ENCODE measurements at regions of chr10 and their contacts with region 1.

Region 1: GRCh38 chr10:68600041-68600778 is 40.1 kb downstream of the TET1 start:
- DNase-seq: peak; percentile 73
- ATAC-seq: peak; percentile 88
- H3K4me3 Mint-ChIP-seq: peak overlapping the region; percentile 80
- H3K27ac Mint-ChIP-seq: peak overlapping the region; percentile 95
- H3K4me1 Mint-ChIP-seq: peaks cover 26% of the 10 kb centered on the region
- H3K27me3 Mint-ChIP-seq: no peaks in the 10 kb centered on the region

Region 2: GRCh38 chr10:68318331-68319059 is 281.7 kb before region 1 on chr10:
- CTCF ChIA-PET with region 1: no interaction called
- POLR2A ChIA-PET with region 1: no interaction called
- intact Hi-C with region 1: no loop called
- DNase-seq: no peak
- ATAC-seq: no peak
- H3K4me3 Mint-ChIP-seq: no peak overlapping the region
- H3K27ac Mint-ChIP-seq: no peak overlapping the region
- H3K4me1 Mint-ChIP-seq: peaks cover 8% of the 10 kb centered on the region
- H3K27me3 Mint-ChIP-seq: no peaks in the 10 kb centered on the region

Region 3: GRCh38 chr10:68489919-68490318 is 110.3 kb before region 1 on chr10:
- CTCF ChIA-PET with region 1: no interaction called
- POLR2A ChIA-PET with region 1: no interaction called
- intact Hi-C with region 1: no loop called
- DNase-seq: peak; percentile 7
- ATAC-seq: peak; percentile 49
- H3K4me3 Mint-ChIP-seq: no peak overlapping the region
- H3K27ac Mint-ChIP-seq: no peak overlapping the region
- H3K4me1 Mint-ChIP-seq: no peaks in the 10 kb centered on the region
- H3K27me3 Mint-ChIP-seq: no peaks in the 10 kb centered on the region

Region 4: GRCh38 chr10:68560186-68560942 is 39.8 kb before region 1 on chr10 and contains the start of gene TET1:
- CTCF ChIA-PET with region 1: interaction called, 4 read pairs
- POLR2A ChIA-PET with region 1: no interaction called
- intact Hi-C with region 1: loop called (anchors 1 to 5 kb)
- DNase-seq: peak; percentile 52
- ATAC-seq: peak; percentile 37
- H3K4me3 Mint-ChIP-seq: peak within 1 kb of the TSS; percentile 58
- H3K27ac Mint-ChIP-seq: no peak within 1 kb of the TSS
- H3K4me1 Mint-ChIP-seq: peaks cover 22% of the 10 kb centered on the region
- H3K27me3 Mint-ChIP-seq: peaks cover 42% of the 10 kb centered on the region
- total RNA-seq, gene TET1: 0.71 to 1.3 TPM

Region 5: GRCh38 chr10:69464801-69465401 is 864.7 kb after region 1 on chr10:
- CTCF ChIA-PET with region 1: no interaction called
- POLR2A ChIA-PET with region 1: no interaction called
- intact Hi-C with region 1: no loop called
- DNase-seq: peak; percentile 13
- ATAC-seq: peak; percentile 49
- H3K4me3 Mint-ChIP-seq: no peak overlapping the region
- H3K27ac Mint-ChIP-seq: no peak overlapping the region
- H3K4me1 Mint-ChIP-seq: peaks cover 2% of the 10 kb centered on the region
- H3K27me3 Mint-ChIP-seq: no peaks in the 10 kb centered on the region